Sigmoid colon (tissue), 7 donors: ENCODE measurements at regions of chr1 and their contacts with region 1.

Region 1: GRCh38 chr1:225474986-225475820 is 47.4 kb upstream of the LBR start:
- DNase-seq: peak; percentile 85
- H3K4me3 ChIP-seq: peak overlapping the region in 3 of 4 donors; percentile 10 to 29 (median 29)
- H3K27ac ChIP-seq: peak overlapping the region in 3 of 4 donors; percentile 93 to 96 (median 93)
- H3K4me1 ChIP-seq: peaks cover 0 to 59% (median 53%) of the 10 kb centered on the region in 4 donors
- H3K27me3 ChIP-seq: no peaks in the 10 kb centered on the region
- CTCF ChIP-seq: peak; percentile 100
- EP300 ChIP-seq: no peak
- POLR2A ChIP-seq: no peak

Region 2: DNA sequence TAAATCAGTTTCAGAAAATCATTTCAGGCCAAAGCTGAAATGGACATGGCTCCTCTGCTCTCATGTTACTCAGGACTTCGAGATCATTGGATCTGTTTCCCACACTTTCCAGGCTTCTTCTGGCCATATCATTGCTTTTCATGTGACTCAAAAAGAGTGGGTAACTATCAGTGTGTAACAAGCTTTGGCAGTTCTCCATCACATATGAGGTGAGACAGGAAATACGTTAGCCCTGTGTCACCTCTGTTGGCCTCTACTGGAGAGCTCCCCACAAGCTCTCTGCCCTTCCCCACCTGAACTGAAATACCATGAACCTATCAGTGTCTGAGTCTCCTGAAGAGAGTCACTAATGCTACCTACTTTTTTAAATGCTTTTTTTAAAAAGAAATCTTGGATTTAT is 175.6 kb before region 1 on chr1:
- intact Hi-C with region 1: no loop called
- DNase-seq: no peak
- H3K4me3 ChIP-seq: no peak overlapping the region
- H3K27ac ChIP-seq: no peak overlapping the region
- H3K4me1 ChIP-seq: no peaks in the 10 kb centered on the region
- H3K27me3 ChIP-seq: no peaks in the 10 kb centered on the region
- CTCF ChIP-seq: no peak
- EP300 ChIP-seq: no peak
- POLR2A ChIP-seq: no peak

Region 3: GRCh38 chr1:225652729-225653462 is 177.7 kb after region 1 on chr1 and contains the start of gene ENAH:
- intact Hi-C with region 1: loop called (anchors 5 kb)
- DNase-seq: peak; percentile 93
- H3K4me3 ChIP-seq: peak within 1 kb of the TSS; percentile 97 to 100 (median 98)
- H3K27ac ChIP-seq: peak within 1 kb of the TSS; percentile 97 to 100 (median 99)
- H3K4me1 ChIP-seq: peaks cover 0 to 53% (median 42%) of the 10 kb centered on the region in 4 donors
- H3K27me3 ChIP-seq: no peaks in the 10 kb centered on the region
- CTCF ChIP-seq: no peak
- EP300 ChIP-seq: no peak
- POLR2A ChIP-seq: no peak
- total RNA-seq, gene ENAH: 92.2 to 197 (median 116) TPM

Region 4: GRCh38 chr1:225772323-225772768 is 297.1 kb after region 1 on chr1:
- intact Hi-C with region 1: loop called (anchors 1 kb)
- DNase-seq: peak; percentile 92
- H3K4me3 ChIP-seq: no peak overlapping the region
- H3K27ac ChIP-seq: peak overlapping the region; percentile 64 to 92 (median 72)
- H3K4me1 ChIP-seq: peaks cover 0 to 76% (median 74%) of the 10 kb centered on the region in 4 donors
- H3K27me3 ChIP-seq: no peaks in the 10 kb centered on the region
- CTCF ChIP-seq: peak; percentile 76 to 92 (median 84)
- EP300 ChIP-seq: no peak
- POLR2A ChIP-seq: no peak

Region 5: DNA sequence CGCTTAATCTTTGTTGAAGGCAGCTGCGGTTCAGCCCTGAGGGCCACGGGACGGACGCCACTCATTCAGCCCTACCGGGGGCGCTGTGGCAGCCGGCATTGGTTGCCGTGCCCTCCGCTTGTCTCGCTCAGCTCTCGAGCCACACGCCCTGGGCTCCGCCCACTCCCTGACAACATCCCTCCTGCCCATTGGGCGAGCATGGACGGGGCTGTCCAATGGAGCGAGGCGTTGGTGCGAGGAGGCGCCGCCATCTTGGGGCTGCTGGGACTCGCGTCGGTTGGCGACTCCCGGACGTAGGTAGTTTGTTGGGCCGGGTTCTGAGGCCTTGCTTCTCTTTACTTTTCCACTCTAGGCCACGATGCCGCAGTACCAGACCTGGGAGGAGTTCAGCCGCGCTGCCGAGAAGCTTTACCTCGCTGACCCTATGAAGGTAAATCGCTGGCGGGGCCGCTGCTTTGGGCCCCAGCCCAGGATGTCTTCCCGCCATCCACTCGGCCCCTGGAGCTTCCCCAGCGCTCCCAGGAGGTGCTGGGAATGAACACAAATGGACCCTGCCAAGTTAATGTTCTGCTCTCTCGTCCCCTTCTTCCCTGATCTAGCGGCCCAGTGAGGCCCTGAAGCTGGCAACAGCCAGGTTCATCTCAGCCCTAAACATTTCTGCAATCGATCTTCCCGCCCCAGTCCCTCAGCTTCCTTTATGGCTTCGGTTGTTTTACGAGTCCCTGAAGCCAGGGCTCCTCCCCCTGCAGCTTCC is 302.6 kb after region 1 on chr1 and contains the start of gene SRP9:
- intact Hi-C with region 1: loop called (anchors 1 kb)
- DNase-seq: peak; percentile 99
- H3K4me3 ChIP-seq: peak within 1 kb of the TSS; percentile 63 to 84 (median 74)
- H3K27ac ChIP-seq: peak within 1 kb of the TSS; percentile 92 to 96 (median 94)
- H3K4me1 ChIP-seq: peaks cover 0 to 82% (median 79%) of the 10 kb centered on the region in 4 donors
- H3K27me3 ChIP-seq: no peaks in the 10 kb centered on the region
- CTCF ChIP-seq: peak; percentile 77 to 93 (median 83)
- EP300 ChIP-seq: no peak
- POLR2A ChIP-seq: peak; percentile 88 to 93
- total RNA-seq, gene SRP9: 148 to 270 (median 220) TPM

Region 6: GRCh38 chr1:225845571-225846259 is 370.5 kb after region 1 on chr1:
- intact Hi-C with region 1: loop called (anchors 1 kb)
- DNase-seq: peak; percentile 93
- H3K4me3 ChIP-seq: no peak overlapping the region
- H3K27ac ChIP-seq: peak overlapping the region; percentile 14 to 68 (median 65)
- H3K4me1 ChIP-seq: peaks cover 0 to 15% (median 13%) of the 10 kb centered on the region in 4 donors
- H3K27me3 ChIP-seq: no peaks in the 10 kb centered on the region
- CTCF ChIP-seq: peak; percentile 77 to 81 (median 80)
- EP300 ChIP-seq: no peak
- POLR2A ChIP-seq: no peak

Region 7: DNA sequence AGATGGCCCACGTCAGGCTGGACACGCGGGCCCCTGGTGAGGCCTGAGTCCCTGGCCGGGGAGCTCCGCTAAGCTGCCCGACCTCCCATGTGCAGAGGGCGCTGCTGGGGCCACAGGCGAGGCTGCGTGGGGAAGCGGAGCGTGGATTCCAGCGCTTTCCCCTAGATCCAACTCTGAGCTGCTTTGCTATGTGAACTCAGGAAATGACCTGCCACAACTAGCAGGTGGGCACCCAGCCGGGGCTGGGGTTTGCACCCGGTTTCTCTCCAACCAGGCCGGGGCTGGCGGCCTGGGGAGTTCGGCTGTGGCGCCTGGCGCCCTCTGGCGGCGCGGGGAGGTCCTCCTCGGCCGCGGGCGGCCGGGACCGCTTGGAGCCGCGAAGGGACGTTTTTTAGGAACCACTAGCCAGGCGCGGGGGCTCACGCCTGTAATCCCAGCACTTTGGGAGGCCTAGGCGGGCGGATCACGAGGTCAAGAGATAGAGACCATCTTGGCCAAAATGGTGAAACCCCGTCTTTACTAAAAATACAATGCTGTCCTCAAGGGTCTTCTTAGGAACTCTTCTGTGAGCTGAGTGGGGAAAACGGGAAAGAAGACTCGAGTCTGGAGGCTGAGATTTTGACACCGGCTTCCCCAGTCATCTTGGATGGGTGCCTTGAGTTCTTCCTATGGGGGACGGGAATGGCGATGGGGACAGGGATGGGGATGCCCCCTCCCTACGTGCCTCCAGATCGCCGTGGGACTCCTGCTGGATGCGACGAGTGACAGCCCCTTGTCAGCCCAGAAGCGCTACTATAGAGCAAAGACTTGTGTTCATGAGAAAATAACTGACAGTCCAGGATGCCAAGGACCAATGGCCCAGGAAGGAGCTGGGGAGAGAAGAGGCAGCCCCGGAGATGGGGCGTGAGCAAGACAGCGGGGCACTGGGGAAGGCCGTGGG is 436.3 kb after region 1 on chr1:
- intact Hi-C with region 1: loop called (anchors 1 kb)
- DNase-seq: peak; percentile 79
- H3K4me3 ChIP-seq: peak overlapping the region in 1 of 4 donors; percentile 8
- H3K27ac ChIP-seq: peak overlapping the region in 2 of 4 donors; percentile 25 to 38
- H3K4me1 ChIP-seq: peaks cover 0 to 11% (median 9%) of the 10 kb centered on the region in 4 donors
- H3K27me3 ChIP-seq: no peaks in the 10 kb centered on the region
- CTCF ChIP-seq: peak; percentile 73 to 96 (median 82)
- EP300 ChIP-seq: no peak
- POLR2A ChIP-seq: no peak

Region 8: GRCh38 chr1:225977937-225978748 is 502.9 kb after region 1 on chr1:
- intact Hi-C with region 1: loop called (anchors 2 kb)
- DNase-seq: peak; percentile 37
- H3K4me3 ChIP-seq: no peak overlapping the region
- H3K27ac ChIP-seq: no peak overlapping the region
- H3K4me1 ChIP-seq: peaks cover 0 to 7% (median 4%) of the 10 kb centered on the region in 4 donors
- H3K27me3 ChIP-seq: no peaks in the 10 kb centered on the region
- CTCF ChIP-seq: no peak
- EP300 ChIP-seq: no peak
- POLR2A ChIP-seq: no peak